ENCODE measurements at regions of chr20 and their contacts with region 1.

Region 1: DNA sequence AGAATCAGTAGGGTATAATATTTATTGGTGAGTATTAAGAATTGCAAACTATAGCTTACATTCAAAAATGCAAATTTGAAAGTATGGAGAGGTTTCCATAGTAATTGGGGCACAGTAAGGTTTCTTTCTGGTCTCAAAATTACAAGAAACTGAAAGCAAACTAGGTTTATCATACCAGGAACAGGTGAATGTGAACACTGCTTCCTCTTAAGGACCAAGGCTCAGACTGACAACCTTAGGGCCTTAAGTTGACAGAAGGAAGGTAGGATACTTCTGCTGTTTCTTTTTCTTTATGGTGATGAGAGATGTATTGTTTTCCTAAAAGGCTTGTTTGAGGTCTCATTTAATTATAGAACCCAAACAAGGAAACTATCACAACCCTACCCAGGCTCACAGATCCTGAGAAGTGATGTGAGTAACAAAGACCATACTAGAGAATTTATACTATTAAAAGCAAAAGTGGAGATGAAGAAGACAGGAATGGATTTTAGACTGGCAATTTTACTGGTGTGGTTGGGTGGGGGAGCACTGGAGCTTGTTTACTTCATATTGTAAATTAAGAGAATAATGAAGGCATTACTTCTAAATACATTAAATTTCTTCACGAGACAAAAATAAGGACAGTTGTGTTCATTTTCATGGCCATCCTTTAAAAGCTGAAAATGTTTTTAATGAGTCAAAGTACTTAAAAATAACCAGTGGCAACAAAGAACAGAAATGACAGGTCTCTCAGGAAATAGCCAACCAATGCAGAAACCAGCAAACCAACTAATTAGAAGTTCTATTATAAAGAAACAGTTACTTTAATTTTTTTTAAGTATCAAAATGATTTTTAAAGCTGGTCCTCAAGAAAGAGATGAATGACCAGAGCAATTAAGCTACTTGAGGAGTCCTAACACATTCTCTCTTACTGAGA is 21.3 kb downstream of the STAU1 start:
- DNase-seq: no peak
- ATAC-seq: peak; percentile 90
- H3K4me3 ChIP-seq: peak overlapping the region; percentile 62
- H3K27ac ChIP-seq: peak overlapping the region; percentile 83
- H3K4me1 ChIP-seq: peaks cover 37% of the 10 kb centered on the region
- H3K27me3 ChIP-seq: no peaks in the 10 kb centered on the region
- CTCF ChIP-seq: no peak
- EP300 ChIP-seq: 0 out of 4 replicates have a peak, but pooled peaks of 1 of the 2 experiments have one; percentile 21
- POLR2A ChIP-seq: no peak
- RAD21 ChIP-seq: no peak

Region 2: GRCh38 chr20:48448629-48449600 is 717.9 kb before region 1 on chr20:
- CTCF ChIA-PET with region 1: no interaction called
- POLR2A ChIA-PET with region 1: no interaction called
- RAD21 ChIA-PET with region 1: no interaction called
- SMC1A ChIA-PET with region 1: no interaction called
- in situ Hi-C with region 1: no loop called
- intact Hi-C with region 1: no loop called
- DNase-seq: no peak
- ATAC-seq: peak; percentile 44
- H3K4me3 ChIP-seq: no peak overlapping the region
- H3K27ac ChIP-seq: no peak overlapping the region
- H3K4me1 ChIP-seq: no peaks in the 10 kb centered on the region
- H3K27me3 ChIP-seq: peaks cover 3% of the 10 kb centered on the region in 2 experiments; a peak in 3 of 4 replicates
- CTCF ChIP-seq: peak in 1 of 3 experiments; percentile 22; a peak in 3 of 6 replicates
- EP300 ChIP-seq: no peak
- POLR2A ChIP-seq: no peak
- RAD21 ChIP-seq: peak; percentile 61

Region 3: DNA sequence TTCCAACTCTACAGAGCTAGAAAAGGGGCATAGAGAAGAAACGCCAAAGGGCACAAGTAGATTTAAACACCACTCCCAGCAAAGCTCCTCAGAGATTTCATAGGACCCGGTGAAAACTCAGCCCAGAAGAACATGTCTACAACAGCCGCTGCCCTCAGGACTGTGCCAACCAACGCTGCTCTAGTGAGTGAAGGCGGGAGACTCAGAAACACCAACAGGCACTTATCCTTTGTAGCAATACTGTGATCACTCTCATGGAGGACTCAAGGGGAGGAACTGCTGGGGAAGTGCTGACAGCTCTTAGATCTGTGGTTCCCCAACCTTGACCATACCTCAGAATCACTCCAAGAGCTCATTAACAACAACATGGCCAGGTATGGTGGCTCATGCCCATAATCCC is 18.2 kb before region 1 on chr20:
- CTCF ChIA-PET with region 1: no interaction called
- POLR2A ChIA-PET with region 1: interaction called, 12 read pairs
- RAD21 ChIA-PET with region 1: interaction called, 3 read pairs
- SMC1A ChIA-PET with region 1: interaction called, 4 read pairs
- in situ Hi-C with region 1: no loop called
- intact Hi-C with region 1: no loop called
- DNase-seq: no peak
- ATAC-seq: no peak
- H3K4me3 ChIP-seq: no peak overlapping the region
- H3K27ac ChIP-seq: no peak overlapping the region
- H3K4me1 ChIP-seq: no peaks in the 10 kb centered on the region
- H3K27me3 ChIP-seq: no peaks in the 10 kb centered on the region
- CTCF ChIP-seq: no peak
- EP300 ChIP-seq: no peak
- POLR2A ChIP-seq: no peak
- RAD21 ChIP-seq: no peak

Region 4: DNA sequence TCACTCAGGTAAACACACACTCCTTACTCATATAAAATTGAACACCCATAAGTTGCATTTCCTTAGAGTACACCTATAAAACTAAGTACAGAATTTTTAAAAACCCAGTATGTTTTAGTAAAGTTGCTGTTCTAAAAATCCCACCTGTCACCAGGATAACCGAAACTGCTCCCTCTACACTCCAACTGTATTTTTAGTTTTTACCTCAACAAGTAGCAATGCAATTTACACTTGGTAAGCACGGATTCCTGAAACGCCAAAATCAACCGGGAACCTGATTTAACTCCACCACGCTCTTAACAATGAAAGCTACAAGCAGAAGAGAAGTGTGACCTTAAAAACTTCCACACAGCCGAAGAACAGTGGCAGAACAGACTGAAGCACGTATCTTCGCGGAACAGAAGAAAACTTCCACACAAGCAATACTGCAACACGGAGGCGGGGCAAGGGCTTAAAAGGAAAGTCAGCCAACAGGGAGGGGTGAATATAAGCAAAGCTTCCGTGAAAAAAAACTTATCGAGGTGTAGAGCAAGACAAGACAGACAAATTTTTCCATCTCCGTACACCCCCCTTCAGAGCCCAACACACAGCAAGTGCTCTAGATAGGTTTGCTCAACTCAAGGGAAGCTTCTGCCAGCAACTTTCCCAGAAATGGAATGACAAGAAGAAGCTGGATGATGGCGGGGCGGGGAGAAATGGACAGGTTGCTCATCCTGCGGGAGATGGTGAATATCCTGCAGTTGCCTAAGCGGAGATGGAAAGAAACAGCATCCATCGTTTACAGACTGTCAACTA is 19.9 kb after region 1 on chr20:
- CTCF ChIA-PET with region 1: interaction called, 113 read pairs
- POLR2A ChIA-PET with region 1: interaction called, 214 read pairs
- RAD21 ChIA-PET with region 1: interaction called, 197 read pairs
- SMC1A ChIA-PET with region 1: interaction called, 271 read pairs
- in situ Hi-C with region 1: no loop called
- intact Hi-C with region 1: loop called (anchors 1 kb)
- DNase-seq: no peak
- ATAC-seq: peak; percentile 46
- H3K4me3 ChIP-seq: peak overlapping the region; percentile 81
- H3K27ac ChIP-seq: peak overlapping the region; percentile 83
- H3K4me1 ChIP-seq: 0 out of 2 replicates have a peak, but pooled peaks cover 3% of the 10 kb centered on the region
- H3K27me3 ChIP-seq: no peaks in the 10 kb centered on the region
- CTCF ChIP-seq: no peak
- EP300 ChIP-seq: no peak
- POLR2A ChIP-seq: no peak
- RAD21 ChIP-seq: no peak

Measured in GM12878 (cell line).